ENCODE measurements at regions of chr2 and their contacts with region 1.

Region 1: GRCh38 chr2:48781366-48781765 is 25.8 kb upstream of the LHCGR start:
- DNase-seq: no peak
- H3K4me3 ChIP-seq: no peak overlapping the region
- H3K27ac ChIP-seq: no peak overlapping the region
- H3K27me3 ChIP-seq: no peaks in the 10 kb centered on the region
- CTCF ChIP-seq: no peak

Region 2: DNA sequence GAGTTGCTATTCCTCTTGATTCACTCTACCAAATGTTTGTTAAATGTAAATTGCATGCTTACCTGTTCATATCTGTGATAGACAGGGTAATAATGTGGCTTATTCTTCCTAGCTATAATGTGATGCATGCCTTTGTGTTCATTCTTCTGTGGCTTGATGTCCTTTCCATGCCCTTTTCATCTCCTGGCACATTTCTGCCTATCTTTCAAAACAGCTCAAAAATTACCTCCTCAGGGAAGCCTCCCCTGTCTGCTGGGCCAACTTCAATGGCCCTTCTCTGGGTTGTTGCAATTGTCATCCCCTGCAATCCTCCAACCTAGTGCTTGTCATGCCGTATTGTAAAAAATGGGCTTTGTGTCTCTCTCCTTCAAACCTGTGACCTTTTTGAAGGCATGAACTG is 26.9 kb after region 1 on chr2:
- intact Hi-C with region 1: loop called in 1 of 2 experiments (anchors 1 kb)
- DNase-seq: no peak
- H3K4me3 ChIP-seq: no peak overlapping the region
- H3K27ac ChIP-seq: no peak overlapping the region
- H3K27me3 ChIP-seq: no peaks in the 10 kb centered on the region
- CTCF ChIP-seq: no peak